ENCODE measurements at regions of chr1 and their contacts with region 1.

Region 1: GRCh38 chr1:225999227-225999911 is at the start of gene SDE2:
- DNase-seq: peak; percentile 100
- H3K4me3 ChIP-seq: peak within 1 kb of the TSS; percentile 75 to 97 (median 90)
- H3K27ac ChIP-seq: peak within 1 kb of the TSS; percentile 96
- H3K4me1 ChIP-seq: peaks cover 52% of the 10 kb centered on the region
- H3K27me3 ChIP-seq: no peaks in the 10 kb centered on the region
- CTCF ChIP-seq: no peak
- POLR2A ChIP-seq: peak; percentile 98
- total RNA-seq, gene SDE2: 15.9 and 16.1 TPM in 2 replicates

Region 2: GRCh38 chr1:225987491-225988316 is 11.7 kb before region 1 on chr1:
- CTCF ChIA-PET with region 1: interaction called, 23 read pairs
- POLR2A ChIA-PET with region 1: interaction called, 4 read pairs
- dilution Hi-C with region 1: no loop called
- intact Hi-C with region 1: no loop called
- DNase-seq: peak; percentile 58
- H3K4me3 ChIP-seq: no peak overlapping the region
- H3K27ac ChIP-seq: no peak overlapping the region
- H3K4me1 ChIP-seq: no peaks in the 10 kb centered on the region
- H3K27me3 ChIP-seq: no peaks in the 10 kb centered on the region
- CTCF ChIP-seq: peak; percentile 36 to 57
- POLR2A ChIP-seq: no peak

Region 3: DNA sequence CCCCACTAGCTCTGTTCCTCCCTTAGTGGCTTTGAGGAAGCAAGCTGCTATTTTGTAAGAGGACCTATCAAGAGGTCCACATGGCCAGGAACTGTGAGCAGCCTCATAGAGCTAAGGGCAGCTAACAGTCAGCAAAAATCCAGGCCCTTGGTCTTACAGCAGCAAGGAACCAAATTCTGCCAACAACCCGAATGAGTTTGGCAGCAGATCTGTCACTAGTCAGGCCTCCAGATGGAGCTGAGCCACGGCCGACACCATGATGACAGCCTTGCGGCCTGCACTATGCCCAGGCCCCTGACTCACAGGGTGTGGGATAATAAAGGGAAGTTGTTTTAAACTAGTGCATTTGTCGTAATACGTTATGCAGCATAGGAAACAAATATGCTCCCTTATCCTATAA is 35.1 kb after region 1 on chr1:
- CTCF ChIA-PET with region 1: no interaction called
- POLR2A ChIA-PET with region 1: no interaction called
- dilution Hi-C with region 1: no loop called
- intact Hi-C with region 1: loop called (anchors 1 kb)
- DNase-seq: peak; percentile 89
- H3K4me3 ChIP-seq: no peak overlapping the region
- H3K27ac ChIP-seq: no peak overlapping the region
- H3K4me1 ChIP-seq: peaks cover 3% of the 10 kb centered on the region
- H3K27me3 ChIP-seq: no peaks in the 10 kb centered on the region
- CTCF ChIP-seq: no peak
- POLR2A ChIP-seq: no peak

Region 4: GRCh38 chr1:226186124-226187018 is 187.0 kb after region 1 on chr1 and contains the start of gene ACBD3:
- CTCF ChIA-PET with region 1: no interaction called
- POLR2A ChIA-PET with region 1: no interaction called
- dilution Hi-C with region 1: no loop called
- intact Hi-C with region 1: loop called (anchors 5 kb)
- DNase-seq: peak; percentile 82
- H3K4me3 ChIP-seq: peak within 1 kb of the TSS; percentile 68 to 93 (median 70)
- H3K27ac ChIP-seq: peak within 1 kb of the TSS; percentile 66
- H3K4me1 ChIP-seq: peaks cover 12% of the 10 kb centered on the region
- H3K27me3 ChIP-seq: no peaks in the 10 kb centered on the region
- CTCF ChIP-seq: peak in 1 of 2 donors; percentile 8
- POLR2A ChIP-seq: peak; percentile 84
- total RNA-seq, gene ACBD3: 36.4 and 37.0 TPM in 2 replicates

Measured in endothelial cell of umbilical vein (primary cell).